ENCODE measurements at regions of chr1 and their contacts with region 1.

Region 1: GRCh38 chr1:25905680-25906643 is at the start of gene STMN1:
- DNase-seq: peak; percentile 62 to 86 (median 79)
- ATAC-seq: peak; percentile 83
- H3K4me3 ChIP-seq: peak within 1 kb of the TSS; percentile 77
- H3K4me3 Mint-ChIP-seq: peak within 1 kb of the TSS; percentile 88 to 98 (median 93)
- H3K27ac ChIP-seq: peak within 1 kb of the TSS; percentile 79
- H3K27ac Mint-ChIP-seq: peak within 1 kb of the TSS; percentile 86 to 97 (median 94)
- H3K4me1 ChIP-seq: peaks cover 8 to 11% of the 10 kb centered on the region in 2 donors
- H3K4me1 Mint-ChIP-seq: peaks cover 11 to 34% (median 22%) of the 10 kb centered on the region in 7 donors
- H3K27me3 ChIP-seq: no peaks in the 10 kb centered on the region
- H3K27me3 Mint-ChIP-seq: peaks cover 0 to 32% (median 0%) of the 10 kb centered on the region in 5 donors
- total RNA-seq, gene STMN1: 29.3 to 347 (median 75.3) TPM

Region 2: GRCh38 chr1:25858906-25859789 is 46.8 kb before region 1 on chr1 and contains the start of gene AUNIP:
- CTCF ChIA-PET with region 1: no interaction called
- POLR2A ChIA-PET with region 1: no interaction called
- intact Hi-C with region 1: loop called (anchors 1 kb)
- DNase-seq: peak; percentile 84 to 95 (median 90)
- ATAC-seq: peak; percentile 100
- H3K4me3 ChIP-seq: peak within 1 kb of the TSS; percentile 78
- H3K4me3 Mint-ChIP-seq: peak within 1 kb of the TSS; percentile 87 to 99 (median 94)
- H3K27ac ChIP-seq: peak within 1 kb of the TSS; percentile 77
- H3K27ac Mint-ChIP-seq: peak within 1 kb of the TSS; percentile 83 to 97 (median 95)
- H3K4me1 ChIP-seq: peaks cover 9 to 10% of the 10 kb centered on the region in 2 donors
- H3K4me1 Mint-ChIP-seq: peaks cover 0 to 32% (median 24%) of the 10 kb centered on the region in 7 donors
- H3K27me3 ChIP-seq: no peaks in the 10 kb centered on the region
- H3K27me3 Mint-ChIP-seq: no peaks in the 10 kb centered on the region
- total RNA-seq, gene AUNIP: 0.83 to 4.3 TPM in 2 of 5 experiments, not detected in the others

Region 3: GRCh38 chr1:25922056-25922969 is 16.4 kb after region 1 on chr1:
- CTCF ChIA-PET with region 1: interaction called, 3 read pairs
- POLR2A ChIA-PET with region 1: interaction called, 51 read pairs
- intact Hi-C with region 1: loop called (anchors 1 to 2 kb)
- DNase-seq: peak; percentile 26 to 64 (median 57)
- ATAC-seq: peak; percentile 84
- H3K4me3 ChIP-seq: peak overlapping the region; percentile 79
- H3K4me3 Mint-ChIP-seq: peak overlapping the region; percentile 78 to 91 (median 88)
- H3K27ac ChIP-seq: peak overlapping the region; percentile 60
- H3K27ac Mint-ChIP-seq: peak overlapping the region; percentile 31 to 90 (median 82)
- H3K4me1 ChIP-seq: peaks cover 19 to 20% of the 10 kb centered on the region in 2 donors
- H3K4me1 Mint-ChIP-seq: peaks cover 23 to 56% (median 43%) of the 10 kb centered on the region in 7 donors
- H3K27me3 ChIP-seq: no peaks in the 10 kb centered on the region
- H3K27me3 Mint-ChIP-seq: peaks cover 0 to 57% (median 0%) of the 10 kb centered on the region in 5 donors

Region 4: GRCh38 chr1:25990702-25991395 is 84.9 kb after region 1 on chr1:
- CTCF ChIA-PET with region 1: interaction called, 361 read pairs
- POLR2A ChIA-PET with region 1: interaction called, 226 read pairs
- intact Hi-C with region 1: no loop called
- DNase-seq: peak in 8 of 9 donors; percentile 31 to 59 (median 56)
- ATAC-seq: peak; percentile 93
- H3K4me3 ChIP-seq: peak overlapping the region; percentile 63
- H3K4me3 Mint-ChIP-seq: peak overlapping the region; percentile 82 to 97 (median 90)
- H3K27ac ChIP-seq: peak overlapping the region; percentile 86
- H3K27ac Mint-ChIP-seq: peak overlapping the region; percentile 81 to 94 (median 91)
- H3K4me1 ChIP-seq: peaks cover 36 to 37% of the 10 kb centered on the region in 2 donors
- H3K4me1 Mint-ChIP-seq: peaks cover 42 to 89% (median 84%) of the 10 kb centered on the region in 7 donors
- H3K27me3 ChIP-seq: no peaks in the 10 kb centered on the region
- H3K27me3 Mint-ChIP-seq: no peaks in the 10 kb centered on the region

Region 5: GRCh38 chr1:26035959-26036755 is 130.2 kb after region 1 on chr1:
- CTCF ChIA-PET with region 1: no interaction called
- POLR2A ChIA-PET with region 1: interaction called, 3 read pairs
- intact Hi-C with region 1: loop called in 1 of 2 experiments (anchors 1 kb)
- DNase-seq: peak; percentile 53 to 89 (median 73)
- ATAC-seq: peak; percentile 87
- H3K4me3 ChIP-seq: peak overlapping the region; percentile 99
- H3K4me3 Mint-ChIP-seq: peak overlapping the region; percentile 93 to 97 (median 96)
- H3K27ac ChIP-seq: peak overlapping the region; percentile 87
- H3K27ac Mint-ChIP-seq: peak overlapping the region; percentile 74 to 96 (median 90)
- H3K4me1 ChIP-seq: peaks cover 5 to 6% of the 10 kb centered on the region in 2 donors
- H3K4me1 Mint-ChIP-seq: peaks cover 0 to 15% (median 8%) of the 10 kb centered on the region in 7 donors
- H3K27me3 ChIP-seq: no peaks in the 10 kb centered on the region
- H3K27me3 Mint-ChIP-seq: peaks cover 0 to 19% (median 0%) of the 10 kb centered on the region in 5 donors

Region 6: DNA sequence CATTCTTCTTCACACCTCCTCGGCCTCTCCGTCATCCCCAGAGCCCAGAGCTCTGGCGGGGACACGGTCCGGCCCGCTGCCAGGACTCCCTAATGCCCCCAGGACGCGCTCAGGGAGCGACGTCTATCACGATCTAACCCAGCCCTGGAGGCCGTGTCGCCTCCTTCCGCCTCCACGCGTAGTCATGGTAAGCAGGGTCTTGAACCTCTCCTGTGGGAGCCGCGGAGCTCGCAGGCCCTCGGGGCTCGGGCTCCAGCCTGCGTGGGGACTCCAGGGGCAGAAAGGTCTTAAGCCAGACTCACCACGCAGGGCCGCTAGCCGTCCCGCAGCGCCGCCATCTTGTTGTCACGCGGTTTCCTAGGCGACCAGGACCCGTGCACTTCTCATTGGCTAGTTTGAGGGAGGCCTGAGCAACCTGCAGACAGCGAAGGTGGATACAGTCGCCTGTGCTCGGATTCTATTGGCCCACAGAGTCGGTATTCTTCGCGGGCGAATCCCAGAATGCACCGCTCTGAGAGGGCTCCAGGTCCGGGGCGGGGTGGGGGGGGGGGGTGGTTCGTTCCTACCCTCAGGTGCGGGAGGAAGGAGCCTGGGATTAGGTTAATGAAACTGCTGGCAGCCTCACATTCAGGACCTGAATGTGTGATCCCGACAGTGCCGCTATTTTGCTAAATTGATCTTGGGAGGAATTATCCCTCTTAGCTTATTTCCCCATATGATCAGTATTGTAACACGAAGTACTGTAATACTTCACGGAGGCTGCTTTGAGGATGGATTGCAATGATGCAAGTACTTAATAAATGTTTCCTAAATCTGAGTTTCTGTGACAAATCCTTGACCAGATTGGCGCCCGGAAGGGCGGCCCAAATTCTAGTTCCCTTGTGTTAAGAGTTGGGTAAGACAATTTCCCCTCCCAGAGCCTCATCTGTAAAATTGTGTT is 400.6 kb after region 1 on chr1 and contains the start of gene UBXN11:
- CTCF ChIA-PET with region 1: no interaction called
- POLR2A ChIA-PET with region 1: no interaction called
- intact Hi-C with region 1: loop called in 1 of 2 experiments (anchors 1 kb)
- DNase-seq: peak; percentile 66 to 95 (median 89)
- ATAC-seq: peak; percentile 99
- H3K4me3 ChIP-seq: peak within 1 kb of the TSS; percentile 87
- H3K4me3 Mint-ChIP-seq: peak within 1 kb of the TSS; percentile 93 to 99 (median 98)
- H3K27ac ChIP-seq: peak within 1 kb of the TSS; percentile 76
- H3K27ac Mint-ChIP-seq: peak within 1 kb of the TSS; percentile 90 to 99 (median 96)
- H3K4me1 ChIP-seq: peaks cover 16 to 31% of the 10 kb centered on the region in 2 donors
- H3K4me1 Mint-ChIP-seq: peaks cover 25 to 58% (median 34%) of the 10 kb centered on the region in 7 donors
- H3K27me3 ChIP-seq: no peaks in the 10 kb centered on the region
- H3K27me3 Mint-ChIP-seq: no peaks in the 10 kb centered on the region
- total RNA-seq, gene UBXN11: 35.7 to 131 (median 124) TPM

Measured in naive thymus-derived CD4-positive, alpha-beta T cell (primary cell).